Adrenal gland (tissue), 19 donors: ENCODE measurements at regions of chr2 and their contacts with region 1.

Region 1: GRCh38 chr2:64914735-64915509 is 74.3 kb upstream of the SLC1A4 start:
- DNase-seq: no peak
- H3K4me3 ChIP-seq: no peak overlapping the region
- H3K27ac ChIP-seq: no peak overlapping the region
- H3K4me1 ChIP-seq: peaks cover 0 to 5% of the 10 kb centered on the region in 2 donors
- H3K27me3 ChIP-seq: no peaks in the 10 kb centered on the region
- CTCF ChIP-seq: no peak
- POLR2A ChIP-seq: no peak

Region 2: GRCh38 chr2:64548761-64549160 is 366.2 kb before region 1 on chr2:
- intact Hi-C with region 1: no loop called
- DNase-seq: no peak
- H3K4me3 ChIP-seq: no peak overlapping the region
- H3K27ac ChIP-seq: no peak overlapping the region
- H3K4me1 ChIP-seq: peaks cover 6 to 17% of the 10 kb centered on the region in 2 donors
- H3K27me3 ChIP-seq: no peaks in the 10 kb centered on the region
- CTCF ChIP-seq: no peak
- POLR2A ChIP-seq: no peak

Region 3: DNA sequence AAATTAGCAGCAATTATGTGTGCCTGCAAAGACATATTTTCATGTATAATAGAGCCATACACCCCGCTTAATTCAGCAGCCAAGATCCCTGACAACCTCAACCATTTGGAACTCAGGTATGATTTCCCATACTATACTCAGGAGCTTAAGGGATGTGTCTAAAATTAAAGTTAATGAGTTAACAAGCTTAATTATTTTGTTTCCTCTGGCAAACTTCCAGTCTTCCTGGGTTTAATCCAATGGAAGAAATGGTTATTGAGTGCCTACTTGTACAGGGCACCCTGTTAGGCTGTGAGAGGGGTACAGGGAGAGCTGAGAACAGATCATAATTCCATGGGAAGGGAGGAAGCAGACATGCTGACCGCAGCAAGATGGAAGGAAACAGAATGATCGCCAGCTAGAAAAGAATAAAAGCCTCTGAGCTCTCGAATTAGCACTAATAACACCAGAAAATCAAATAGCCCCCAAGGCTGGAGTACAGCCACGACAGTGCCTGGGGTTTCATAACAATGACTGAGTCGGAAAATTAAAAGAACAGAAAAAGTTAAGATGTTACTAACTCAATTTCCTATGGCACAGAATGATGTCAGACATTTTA is 120.5 kb after region 1 on chr2:
- intact Hi-C with region 1: loop called (anchors 2 to 5 kb)
- DNase-seq: no peak
- H3K4me3 ChIP-seq: no peak overlapping the region
- H3K27ac ChIP-seq: peak overlapping the region in 1 of 5 donors; percentile 47
- H3K4me1 ChIP-seq: peaks cover 0 to 15% of the 10 kb centered on the region in 2 donors
- H3K27me3 ChIP-seq: no peaks in the 10 kb centered on the region
- CTCF ChIP-seq: no peak
- POLR2A ChIP-seq: no peak

Region 4: GRCh38 chr2:65177751-65178442 is 263.0 kb after region 1 on chr2:
- intact Hi-C with region 1: loop called in 1 of 2 experiments (anchors 10 kb)
- DNase-seq: peak in 1 of 7 donors; percentile 7
- H3K4me3 ChIP-seq: no peak overlapping the region
- H3K27ac ChIP-seq: no peak overlapping the region
- H3K4me1 ChIP-seq: no peaks in the 10 kb centered on the region
- H3K27me3 ChIP-seq: no peaks in the 10 kb centered on the region
- CTCF ChIP-seq: no peak
- POLR2A ChIP-seq: no peak

Region 5: DNA sequence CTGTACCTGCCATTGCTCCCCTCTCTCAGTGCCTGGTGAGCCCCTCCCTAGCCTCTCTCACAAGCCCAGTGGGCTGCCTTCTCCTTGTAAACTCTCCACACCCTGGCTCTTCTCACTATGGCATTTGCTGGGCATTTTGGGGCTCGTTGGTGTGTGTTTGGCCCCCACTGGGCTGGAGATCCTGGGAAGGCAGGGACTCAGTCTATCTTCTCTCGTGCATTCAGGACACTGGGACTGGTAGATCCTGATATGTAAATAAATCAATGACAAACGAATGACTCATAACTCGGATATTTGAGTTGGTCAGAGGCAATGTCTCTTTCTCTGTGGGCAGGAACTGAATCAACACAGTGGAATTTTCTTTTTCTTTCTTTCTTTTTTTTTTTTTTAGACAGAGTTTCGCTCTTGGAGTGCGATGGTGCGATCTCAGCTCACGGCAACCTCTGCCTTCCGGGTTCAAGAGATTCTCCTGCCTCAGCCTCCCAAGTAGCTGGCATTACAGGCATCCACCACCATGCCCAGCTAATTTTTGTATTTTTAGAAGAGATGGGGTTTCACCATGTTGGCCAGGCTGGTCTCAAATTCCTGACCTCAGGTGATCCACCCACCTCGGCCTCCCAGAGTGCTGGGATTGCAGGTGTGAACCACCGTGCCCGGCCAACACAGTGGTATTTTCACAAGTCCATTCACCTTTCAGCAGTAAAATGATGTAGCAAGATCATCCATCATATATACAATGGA is 662.1 kb after region 1 on chr2:
- intact Hi-C with region 1: loop called in 1 of 2 experiments (anchors 10 kb)
- DNase-seq: peak in 2 of 7 donors; percentile 10 to 31
- H3K4me3 ChIP-seq: no peak overlapping the region
- H3K27ac ChIP-seq: peak overlapping the region in 1 of 5 donors; percentile 43
- H3K4me1 ChIP-seq: no peaks in the 10 kb centered on the region
- H3K27me3 ChIP-seq: no peaks in the 10 kb centered on the region
- CTCF ChIP-seq: no peak
- POLR2A ChIP-seq: peak in 1 of 2 donors; percentile 52